ENCODE measurements at regions of chr10 and their contacts with region 1.

Region 1: DNA sequence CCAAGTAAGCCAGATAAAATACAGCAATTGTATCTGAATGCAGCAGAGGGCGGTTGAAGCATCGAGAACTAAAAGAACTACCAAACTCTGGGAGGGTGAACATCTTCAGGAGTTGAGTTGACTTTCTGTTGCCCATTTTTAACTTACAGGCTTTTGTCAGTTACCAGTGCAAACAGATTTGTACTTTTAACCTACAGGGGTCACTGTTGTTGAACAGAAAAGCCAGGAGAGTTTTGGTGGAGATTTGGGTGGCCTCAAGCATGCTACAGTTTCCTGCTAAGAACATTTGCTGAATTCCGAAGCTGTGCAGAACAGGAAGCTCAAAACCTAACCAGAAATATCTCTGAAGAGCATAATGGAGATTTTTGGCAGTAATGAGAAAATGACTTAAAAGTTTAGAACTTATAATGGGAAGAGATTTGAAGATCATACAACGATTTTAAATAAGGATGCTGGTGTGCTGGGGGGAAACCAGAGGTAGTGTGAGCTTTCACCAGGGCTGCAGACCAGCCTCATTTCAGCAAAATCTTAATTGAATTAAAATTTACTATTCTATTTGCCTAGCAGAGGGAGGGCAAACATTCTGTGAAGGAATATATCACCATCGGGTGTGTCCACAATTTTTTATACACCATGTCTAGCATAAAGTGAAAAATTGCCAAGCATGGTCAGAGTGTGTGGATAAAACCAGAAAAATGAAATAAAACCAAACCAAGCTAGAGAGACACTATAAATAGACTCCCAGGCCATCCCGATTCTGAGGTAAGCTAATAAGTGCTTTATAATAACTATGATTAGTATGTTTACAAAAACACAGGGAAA is 208.6 kb upstream of the CCDC6 start:
- DNase-seq: peak; percentile 32
- CTCF ChIP-seq: peak; percentile 35

Region 2: GRCh38 chr10:58951746-58952145 is 1163.2 kb before region 1 on chr10:
- CTCF ChIA-PET with region 1: no interaction called
- POLR2A ChIA-PET with region 1: no interaction called
- DNase-seq: no peak
- CTCF ChIP-seq: no peak

Region 3: GRCh38 chr10:60099998-60100747 is 14.8 kb before region 1 on chr10:
- CTCF ChIA-PET with region 1: interaction called, 11 read pairs
- POLR2A ChIA-PET with region 1: no interaction called
- DNase-seq: peak; percentile 24
- CTCF ChIP-seq: peak; percentile 56

Measured in GM10248 (cell line).